ENCODE measurements at regions of chr6 and their contacts with region 1.

Region 1: DNA sequence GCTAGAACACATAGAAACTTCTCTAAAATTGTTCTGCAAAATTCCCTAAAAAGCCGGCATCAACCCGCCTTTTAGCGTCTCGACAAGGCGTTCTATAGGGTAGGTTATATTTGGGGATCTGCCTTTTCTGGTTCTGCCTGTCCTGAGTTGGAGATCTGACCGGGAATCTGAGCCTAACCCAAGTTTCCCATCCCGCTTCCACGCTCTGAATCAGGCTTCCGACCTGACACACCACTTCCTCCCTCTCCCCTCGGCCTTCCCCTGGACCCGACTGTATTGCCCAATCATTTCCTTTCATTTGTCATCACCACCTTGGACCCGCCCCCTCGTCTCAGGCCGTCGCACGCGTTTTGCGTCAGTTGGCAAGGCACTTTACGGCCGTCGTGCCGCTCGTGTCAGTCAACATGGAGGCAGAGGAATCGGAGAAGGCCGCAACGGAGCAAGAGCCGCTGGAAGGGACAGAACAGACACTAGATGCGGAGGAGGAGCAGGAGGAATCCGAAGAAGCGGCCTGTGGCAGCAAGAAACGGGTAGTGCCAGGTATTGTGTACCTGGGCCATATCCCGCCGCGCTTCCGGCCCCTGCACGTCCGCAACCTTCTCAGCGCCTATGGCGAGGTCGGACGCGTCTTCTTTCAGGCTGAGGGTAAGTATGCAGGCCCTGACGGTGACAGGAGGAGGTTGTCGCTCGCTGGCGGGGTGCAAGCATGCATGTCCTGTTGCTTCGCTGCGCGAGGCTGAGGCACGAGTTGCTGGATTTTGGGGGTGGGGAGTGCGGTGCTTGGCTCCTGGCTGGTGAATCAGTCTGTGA is at the start of gene ABT1:
- DNase-seq: peak; percentile 98
- ATAC-seq: peak; percentile 77
- H3K4me3 Mint-ChIP-seq: no peak within 1 kb of the TSS
- H3K27ac Mint-ChIP-seq: no peak within 1 kb of the TSS
- H3K4me1 Mint-ChIP-seq: peaks cover 40% of the 10 kb centered on the region
- H3K27me3 Mint-ChIP-seq: peaks cover 14% of the 10 kb centered on the region
- CTCF ChIP-seq: no peak
- total RNA-seq, gene ABT1: 27.7 to 27.9 TPM

Region 2: GRCh38 chr6:24991810-24992467 is 1604.8 kb before region 1 on chr6:
- CTCF ChIA-PET with region 1: no interaction called
- POLR2A ChIA-PET with region 1: no interaction called
- intact Hi-C with region 1: no loop called
- DNase-seq: peak; percentile 79
- ATAC-seq: peak; percentile 94
- H3K4me3 Mint-ChIP-seq: peak overlapping the region; percentile 14
- H3K27ac Mint-ChIP-seq: peak overlapping the region; percentile 89
- H3K4me1 Mint-ChIP-seq: peaks cover 49% of the 10 kb centered on the region
- H3K27me3 Mint-ChIP-seq: no peaks in the 10 kb centered on the region
- CTCF ChIP-seq: peak; percentile 78

Region 3: DNA sequence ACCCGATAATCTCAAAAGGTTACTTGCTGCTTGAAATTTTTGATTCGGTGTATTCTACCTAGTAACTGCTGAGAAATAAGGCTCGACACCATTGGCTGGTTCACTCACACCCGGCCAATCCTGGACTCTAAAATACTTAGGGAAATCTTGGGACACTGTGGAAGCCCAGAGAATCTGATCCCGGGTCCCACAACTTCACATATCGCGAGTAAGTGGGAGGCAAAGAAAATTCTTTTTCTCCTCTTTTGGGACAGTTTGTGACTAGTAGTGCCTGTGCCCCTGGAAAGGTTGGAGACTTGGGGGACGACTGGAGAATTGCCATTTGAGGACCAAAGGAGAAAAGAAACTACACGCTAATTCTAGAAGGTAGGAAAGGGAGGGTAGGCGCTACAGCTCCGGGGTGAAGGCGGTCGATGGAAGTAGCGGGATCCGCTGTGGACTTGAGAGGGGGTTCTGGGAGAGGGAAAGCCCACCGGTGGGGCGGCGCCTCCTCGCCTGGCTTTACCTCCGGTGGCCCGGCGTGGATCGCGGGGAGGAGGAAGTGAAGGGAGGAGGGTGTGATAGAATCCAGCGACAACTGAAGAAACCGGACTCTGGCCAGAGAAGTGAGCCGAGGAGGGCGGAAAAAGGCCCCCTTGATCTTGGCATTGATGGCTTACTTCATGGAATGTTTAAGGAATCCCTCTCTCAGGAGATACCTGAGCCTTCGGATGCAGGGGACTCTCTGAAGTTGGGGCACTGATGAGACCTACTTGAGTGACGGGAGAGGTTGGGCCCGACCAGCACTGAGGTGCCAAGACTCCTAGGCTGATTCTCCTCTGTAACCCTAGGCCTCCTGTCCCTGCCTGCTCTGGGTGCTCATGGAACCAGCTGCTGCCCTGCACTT is 175.3 kb before region 1 on chr6:
- CTCF ChIA-PET with region 1: no interaction called
- POLR2A ChIA-PET with region 1: no interaction called
- intact Hi-C with region 1: no loop called
- DNase-seq: peak; percentile 67
- ATAC-seq: peak; percentile 95
- H3K4me3 Mint-ChIP-seq: no peak overlapping the region
- H3K27ac Mint-ChIP-seq: no peak overlapping the region
- H3K4me1 Mint-ChIP-seq: peaks cover 8% of the 10 kb centered on the region
- H3K27me3 Mint-ChIP-seq: no peaks in the 10 kb centered on the region
- CTCF ChIP-seq: no peak

Region 4: GRCh38 chr6:26568601-26569432 is 28.0 kb before region 1 on chr6:
- CTCF ChIA-PET with region 1: interaction called, 180 read pairs
- POLR2A ChIA-PET with region 1: interaction called, 25 read pairs
- intact Hi-C with region 1: loop called (anchors 1 kb)
- DNase-seq: peak; percentile 95
- ATAC-seq: peak; percentile 75
- H3K4me3 Mint-ChIP-seq: peak overlapping the region; percentile 89
- H3K27ac Mint-ChIP-seq: peak overlapping the region; percentile 88
- H3K4me1 Mint-ChIP-seq: peaks cover 23% of the 10 kb centered on the region
- H3K27me3 Mint-ChIP-seq: peaks cover 3% of the 10 kb centered on the region
- CTCF ChIP-seq: peak; percentile 43

Measured in activated CD8-positive, alpha-beta T cell treated with anti-CD3 and anti-CD28 coated beads for 36 hours (primary cell).